Activated naive CD4-positive, alpha-beta T cell treated with anti-CD3 and anti-CD28 coated beads for 36 hours (primary cell): ENCODE measurements at regions of chr2 and their contacts with region 1.

Region 1: GRCh38 chr2:149587220-149587949 is at the start of gene MMADHC:
- DNase-seq: peak; percentile 96
- H3K4me3 Mint-ChIP-seq: peak within 1 kb of the TSS; percentile 96
- H3K27ac Mint-ChIP-seq: peak within 1 kb of the TSS; percentile 98
- H3K4me1 Mint-ChIP-seq: peaks cover 30% of the 10 kb centered on the region
- H3K27me3 Mint-ChIP-seq: peaks cover 11% of the 10 kb centered on the region
- total RNA-seq, gene MMADHC: 142 to 143 TPM

Region 2: DNA sequence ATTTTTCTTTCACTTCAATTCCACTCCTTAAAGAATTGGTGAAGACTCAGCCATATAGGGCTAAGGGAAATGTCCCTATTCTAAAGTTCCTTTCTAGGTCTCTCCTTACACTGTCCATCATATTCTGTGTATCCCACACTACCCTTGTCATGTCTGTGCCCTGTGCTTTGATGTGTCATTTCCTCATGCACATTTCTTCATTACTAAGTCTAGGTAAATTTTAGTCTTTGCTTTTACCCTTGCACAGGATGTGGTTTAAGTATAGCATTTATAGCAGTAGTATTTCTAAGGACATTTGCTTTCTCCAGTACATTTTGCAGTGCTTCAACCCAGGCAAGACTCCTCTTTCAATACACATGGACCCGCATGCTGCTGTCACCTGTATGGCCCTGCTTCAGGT is 1964.1 kb before region 1 on chr2:
- CTCF ChIA-PET with region 1: no interaction called
- intact Hi-C with region 1: loop called (anchors 10 kb)
- DNase-seq: peak; percentile 44
- H3K4me3 Mint-ChIP-seq: no peak overlapping the region
- H3K27ac Mint-ChIP-seq: peak overlapping the region; percentile 79
- H3K4me1 Mint-ChIP-seq: peaks cover 43% of the 10 kb centered on the region
- H3K27me3 Mint-ChIP-seq: no peaks in the 10 kb centered on the region

Region 3: DNA sequence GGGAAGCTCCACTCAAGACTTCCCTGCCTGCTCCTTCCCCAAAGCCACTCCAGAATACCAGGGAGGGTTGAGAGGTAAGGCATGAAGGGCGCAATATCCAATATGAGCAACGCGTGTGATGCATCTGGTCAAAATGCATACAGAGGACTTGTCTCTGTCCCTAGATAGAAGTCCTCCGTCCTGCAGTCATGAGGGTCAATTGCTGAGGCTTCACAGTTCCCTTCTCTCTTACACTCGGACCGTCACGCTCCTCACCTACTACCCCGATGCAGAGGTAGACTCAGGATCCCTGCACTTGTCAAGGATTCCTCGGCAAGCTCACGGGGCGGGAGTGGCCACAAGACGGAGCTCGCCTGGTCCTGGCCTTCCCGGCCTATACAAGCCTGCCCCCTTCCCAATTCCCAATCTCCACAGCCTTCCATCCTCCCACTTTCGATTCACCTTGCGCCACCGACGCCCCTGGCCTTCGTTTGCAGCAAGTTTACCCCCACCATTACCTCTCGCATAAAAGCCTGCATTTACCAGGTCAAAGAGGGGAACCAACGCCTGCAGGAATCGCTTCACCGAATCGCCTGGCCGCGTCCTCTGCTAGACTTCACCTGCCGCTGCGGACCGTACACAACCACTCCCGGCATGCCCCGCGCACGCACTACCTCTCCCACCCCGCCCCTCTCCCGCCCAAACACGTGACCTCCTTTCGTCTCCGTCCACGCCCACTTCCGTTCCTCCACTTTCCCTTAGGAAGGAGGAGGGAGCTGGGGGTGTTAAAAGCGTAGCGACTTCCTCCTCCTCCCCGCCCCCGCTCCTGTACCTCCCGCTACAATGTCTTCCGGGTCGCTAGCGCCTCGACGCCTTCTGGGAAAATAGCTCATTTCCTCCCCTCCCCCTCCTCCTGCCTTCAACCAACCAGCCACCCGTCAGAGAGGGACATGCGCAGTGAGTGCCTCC is 1567.0 kb before region 1 on chr2 and contains the start of gene ORC4:
- CTCF ChIA-PET with region 1: no interaction called
- intact Hi-C with region 1: loop called (anchors 1 kb)
- DNase-seq: peak; percentile 99
- H3K4me3 Mint-ChIP-seq: peak within 1 kb of the TSS; percentile 100
- H3K27ac Mint-ChIP-seq: peak within 1 kb of the TSS; percentile 96
- H3K4me1 Mint-ChIP-seq: peaks cover 44% of the 10 kb centered on the region
- H3K27me3 Mint-ChIP-seq: no peaks in the 10 kb centered on the region
- total RNA-seq, gene ORC4: 35.9 to 38.8 TPM

Region 4: GRCh38 chr2:151261231-151261976 is 1674.0 kb after region 1 on chr2 and contains the start of gene RBM43:
- CTCF ChIA-PET with region 1: no interaction called
- intact Hi-C with region 1: loop called (anchors 2 kb)
- DNase-seq: peak; percentile 81
- H3K4me3 Mint-ChIP-seq: peak within 1 kb of the TSS; percentile 87
- H3K27ac Mint-ChIP-seq: peak within 1 kb of the TSS; percentile 87
- H3K4me1 Mint-ChIP-seq: peaks cover 18% of the 10 kb centered on the region
- H3K27me3 Mint-ChIP-seq: no peaks in the 10 kb centered on the region
- total RNA-seq, gene RBM43: 3.4 to 3.8 TPM

Region 5: GRCh38 chr2:151409601-151410484 is 1822.5 kb after region 1 on chr2 and contains the start of gene RIF1:
- CTCF ChIA-PET with region 1: no interaction called
- intact Hi-C with region 1: loop called (anchors 1 kb)
- DNase-seq: peak; percentile 88
- H3K4me3 Mint-ChIP-seq: peak within 1 kb of the TSS; percentile 100
- H3K27ac Mint-ChIP-seq: peak within 1 kb of the TSS; percentile 95
- H3K4me1 Mint-ChIP-seq: peaks cover 18% of the 10 kb centered on the region
- H3K27me3 Mint-ChIP-seq: no peaks in the 10 kb centered on the region
- total RNA-seq, gene RIF1: 53.0 TPM

Region 6: DNA sequence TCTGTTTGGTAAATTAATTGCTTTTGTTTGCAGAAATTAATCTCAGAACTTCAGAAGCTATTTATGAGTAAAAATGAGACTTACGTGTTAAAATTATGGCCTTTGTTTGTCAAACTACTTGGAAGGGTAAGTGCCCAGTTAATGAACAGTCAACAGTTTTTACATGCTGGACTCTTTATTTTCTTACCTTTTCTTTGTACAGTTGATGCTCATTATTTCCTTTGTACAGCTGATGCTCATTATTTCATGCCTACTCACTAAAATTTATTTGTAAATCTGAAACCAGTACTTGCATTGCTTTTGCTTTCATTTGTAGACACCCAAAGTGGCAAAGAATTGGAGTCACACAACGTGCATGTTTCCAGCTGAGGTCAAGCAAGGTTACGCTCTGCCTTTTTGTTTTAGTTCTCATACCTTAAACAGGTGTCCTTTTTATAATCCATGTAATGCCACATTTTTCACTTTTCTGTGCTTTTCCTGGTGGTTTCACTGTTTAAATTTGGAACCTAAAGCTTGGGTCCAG is 1835.6 kb after region 1 on chr2:
- CTCF ChIA-PET with region 1: no interaction called
- intact Hi-C with region 1: loop called (anchors 5 kb)
- DNase-seq: peak; percentile 21
- H3K4me3 Mint-ChIP-seq: no peak overlapping the region
- H3K27ac Mint-ChIP-seq: peak overlapping the region; percentile 77
- H3K4me1 Mint-ChIP-seq: peaks cover 37% of the 10 kb centered on the region
- H3K27me3 Mint-ChIP-seq: no peaks in the 10 kb centered on the region